ENCODE measurements at regions of chr22 and their contacts with region 1.

Region 1: DNA sequence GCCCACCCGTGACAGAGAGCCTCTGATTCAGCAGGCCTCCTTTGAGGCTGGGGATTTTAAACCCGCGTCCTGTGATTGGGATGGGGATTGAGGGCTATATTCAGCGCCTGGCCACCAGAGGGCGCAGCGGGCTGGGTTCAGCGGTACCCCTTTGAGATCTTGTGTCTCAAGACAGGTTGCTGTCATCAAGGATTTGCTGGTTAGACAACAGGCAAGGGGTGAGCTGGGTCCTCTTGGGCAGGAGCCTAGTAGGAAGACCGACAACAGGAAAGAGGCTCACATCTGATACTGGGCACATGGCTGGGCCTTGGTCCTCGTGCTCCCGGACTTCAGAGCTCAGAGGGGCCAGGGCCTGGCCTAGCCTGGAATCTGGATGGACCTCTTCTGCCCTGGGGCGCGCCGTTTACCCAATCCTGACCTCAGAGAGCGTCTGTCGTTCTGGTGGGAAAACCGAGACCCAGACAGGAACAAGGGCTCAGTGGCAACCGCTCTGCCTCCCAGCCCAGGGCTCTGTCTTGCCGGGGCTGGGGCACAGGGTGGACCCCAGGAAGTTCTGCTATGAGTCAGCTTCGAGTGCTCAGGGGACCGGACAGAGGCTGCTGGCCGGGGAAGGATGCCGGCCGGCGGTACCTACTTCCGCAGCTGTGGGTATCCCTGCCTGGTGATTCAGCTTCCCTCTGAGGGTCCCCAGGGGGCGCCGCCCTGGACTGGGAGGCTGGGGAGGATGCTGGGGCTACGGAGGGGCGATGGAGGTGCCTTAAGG is 929 bp upstream of the SLC35E4 start:
- DNase-seq: peak; percentile 93
- ATAC-seq: peak; percentile 67
- H3K4me3 Mint-ChIP-seq: peak overlapping the region; percentile 72
- H3K27ac Mint-ChIP-seq: peak overlapping the region; percentile 96
- H3K4me1 Mint-ChIP-seq: peaks cover 18% of the 10 kb centered on the region
- H3K27me3 Mint-ChIP-seq: no peaks in the 10 kb centered on the region

Region 2: GRCh38 chr22:30555282-30556210 is 79.1 kb before region 1 on chr22:
- CTCF ChIA-PET with region 1: no interaction called
- DNase-seq: no peak
- ATAC-seq: no peak
- H3K4me3 Mint-ChIP-seq: no peak overlapping the region
- H3K27ac Mint-ChIP-seq: no peak overlapping the region
- H3K4me1 Mint-ChIP-seq: no peaks in the 10 kb centered on the region
- H3K27me3 Mint-ChIP-seq: no peaks in the 10 kb centered on the region

Region 3: GRCh38 chr22:30649430-30650007 is 14.9 kb after region 1 on chr22:
- CTCF ChIA-PET with region 1: interaction called, 36 read pairs
- DNase-seq: peak; percentile 90
- ATAC-seq: peak; percentile 100
- H3K4me3 Mint-ChIP-seq: no peak overlapping the region
- H3K27ac Mint-ChIP-seq: peak overlapping the region; percentile 86
- H3K4me1 Mint-ChIP-seq: peaks cover 31% of the 10 kb centered on the region
- H3K27me3 Mint-ChIP-seq: no peaks in the 10 kb centered on the region

Region 4: GRCh38 chr22:30694171-30694639 is 59.6 kb after region 1 on chr22:
- CTCF ChIA-PET with region 1: interaction called, 20 read pairs
- DNase-seq: peak; percentile 74
- ATAC-seq: peak; percentile 78
- H3K4me3 Mint-ChIP-seq: peak overlapping the region; percentile 77
- H3K27ac Mint-ChIP-seq: peak overlapping the region; percentile 79
- H3K4me1 Mint-ChIP-seq: peaks cover 16% of the 10 kb centered on the region
- H3K27me3 Mint-ChIP-seq: peaks cover 10% of the 10 kb centered on the region

Region 5: GRCh38 chr22:30742291-30743256 is 107.9 kb after region 1 on chr22:
- CTCF ChIA-PET with region 1: interaction called, 57 read pairs
- DNase-seq: peak; percentile 73
- ATAC-seq: peak; percentile 50
- H3K4me3 Mint-ChIP-seq: peak overlapping the region; percentile 52
- H3K27ac Mint-ChIP-seq: peak overlapping the region; percentile 98
- H3K4me1 Mint-ChIP-seq: peaks cover 77% of the 10 kb centered on the region
- H3K27me3 Mint-ChIP-seq: no peaks in the 10 kb centered on the region

Region 6: DNA sequence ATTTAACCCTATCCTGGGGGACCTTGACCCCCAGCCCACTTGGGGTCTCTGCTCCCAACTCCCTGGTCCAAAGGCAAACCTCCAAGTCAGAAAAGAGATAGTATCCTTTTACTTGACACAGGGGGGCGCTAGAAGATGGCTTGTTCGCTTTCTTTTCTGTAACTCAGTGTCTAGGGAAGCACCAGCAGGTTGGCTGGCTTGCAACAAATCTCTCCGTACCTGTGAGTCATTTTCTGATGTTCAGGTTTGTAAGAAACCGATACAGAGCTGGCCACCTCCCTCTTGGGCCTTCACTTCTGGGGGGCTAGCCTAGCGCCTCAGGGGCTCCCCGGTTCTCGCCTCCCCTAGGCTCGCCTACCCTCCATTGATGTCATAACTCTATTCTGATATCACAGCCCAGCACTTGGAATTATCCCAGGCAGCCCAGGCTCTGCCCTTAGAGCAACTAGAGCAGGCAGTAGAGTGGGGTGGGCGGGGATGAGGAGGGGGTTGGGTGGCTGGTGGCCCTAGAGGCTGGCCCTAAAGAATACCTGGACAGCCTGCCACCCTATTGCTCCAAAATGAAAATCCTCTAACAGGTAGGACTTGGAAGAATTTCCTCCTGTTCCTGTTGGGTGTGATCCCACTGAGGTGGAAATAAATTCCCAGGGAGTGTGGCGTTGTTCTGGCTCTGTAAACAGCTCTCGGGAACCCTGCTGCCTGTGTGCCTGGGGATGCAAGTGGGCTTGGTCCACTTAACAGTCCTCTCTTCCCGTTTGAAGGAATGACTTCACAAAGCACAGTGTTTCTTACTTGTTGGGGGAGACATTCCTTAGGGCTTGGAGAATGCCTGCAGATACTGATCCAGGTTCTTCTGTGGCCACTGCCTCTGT is 129.4 kb after region 1 on chr22:
- CTCF ChIA-PET with region 1: interaction called, 186 read pairs
- DNase-seq: peak; percentile 74
- ATAC-seq: peak; percentile 87
- H3K4me3 Mint-ChIP-seq: no peak overlapping the region
- H3K27ac Mint-ChIP-seq: no peak overlapping the region
- H3K4me1 Mint-ChIP-seq: peaks cover 2% of the 10 kb centered on the region
- H3K27me3 Mint-ChIP-seq: no peaks in the 10 kb centered on the region

Measured in activated CD8-positive, alpha-beta memory T cell treated with anti-CD3 and anti-CD28 coated beads, Interleukin-2, amount 10 ng/mL, durations not matched to agents 7 days and 5 days (primary cell).